Kidney (tissue), 22 donors: ENCODE measurements at regions of chr2 and their contacts with region 1.

Region 1: GRCh38 chr2:127324635-127325034 is 30.7 kb upstream of the ERCC3 start:
- DNase-seq: peak in 3 of 5 donors; percentile 18 to 68 (median 59)
- H3K4me3 ChIP-seq: no peak overlapping the region
- H3K27ac ChIP-seq: no peak overlapping the region
- H3K4me1 ChIP-seq: no peaks in the 10 kb centered on the region
- H3K27me3 ChIP-seq: no peaks in the 10 kb centered on the region
- CTCF ChIP-seq: peak; percentile 45

Region 2: DNA sequence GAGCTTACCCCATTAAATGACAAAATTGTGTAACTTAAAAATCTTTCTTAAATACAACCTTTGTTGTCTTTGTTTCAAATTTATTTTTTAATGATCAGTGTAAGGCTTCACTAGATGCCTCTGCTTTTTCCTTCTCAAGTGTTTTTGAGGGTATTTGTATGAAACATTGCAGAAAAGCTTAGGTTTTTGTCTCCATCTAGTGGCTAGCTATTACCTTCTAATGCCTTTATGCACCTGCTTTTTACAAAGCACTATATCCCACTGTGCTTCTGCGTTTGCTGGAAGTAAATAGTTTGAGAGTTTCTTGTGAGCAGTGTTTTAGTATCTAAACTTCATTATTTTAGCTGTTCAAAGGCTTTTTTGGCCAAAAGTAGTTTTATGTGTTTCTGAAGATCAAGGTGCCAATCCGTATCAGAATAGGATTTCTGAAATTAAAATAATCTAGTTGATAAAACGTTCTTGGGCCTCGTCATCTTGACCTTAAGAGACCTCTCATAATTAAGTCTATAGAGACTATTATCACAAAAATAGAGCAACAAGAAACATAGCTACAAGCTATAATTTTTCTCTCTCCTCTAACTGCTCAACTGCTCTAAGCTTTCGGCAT is 154.7 kb after region 1 on chr2:
- intact Hi-C with region 1: loop called (anchors 5 kb)
- DNase-seq: peak in 2 of 5 donors; percentile 79 to 87
- H3K4me3 ChIP-seq: no peak overlapping the region
- H3K27ac ChIP-seq: no peak overlapping the region
- H3K4me1 ChIP-seq: no peaks in the 10 kb centered on the region
- H3K27me3 ChIP-seq: no peaks in the 10 kb centered on the region
- CTCF ChIP-seq: peak; percentile 72

Region 3: DNA sequence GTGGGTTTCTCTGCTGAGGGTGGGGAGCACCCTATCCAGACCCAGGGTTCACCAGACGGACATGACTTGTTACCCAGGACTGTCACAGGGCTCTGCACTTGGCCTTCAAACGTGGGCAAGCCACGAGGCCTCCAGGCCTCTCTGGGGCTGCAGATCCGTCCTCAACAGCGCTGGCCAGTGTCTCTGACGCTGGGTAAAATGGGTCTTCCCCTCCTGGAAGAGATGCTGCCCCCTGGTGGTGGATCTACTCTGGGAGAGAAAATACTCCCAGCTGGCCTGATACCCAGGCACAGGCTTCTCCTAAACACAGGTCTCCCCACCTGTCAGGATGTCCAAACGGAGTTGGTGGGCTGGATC is 325.0 kb after region 1 on chr2:
- intact Hi-C with region 1: no loop called
- DNase-seq: peak; percentile 81 to 91 (median 84)
- H3K4me3 ChIP-seq: no peak overlapping the region
- H3K27ac ChIP-seq: no peak overlapping the region
- H3K4me1 ChIP-seq: peaks cover 0 to 20% (median 6%) of the 10 kb centered on the region in 3 donors
- H3K27me3 ChIP-seq: no peaks in the 10 kb centered on the region
- CTCF ChIP-seq: peak; percentile 81